Astrocyte of the cerebellum (primary cell): ENCODE measurements at regions of chr10 and their contacts with region 1.

Region 1: GRCh38 chr10:11017570-11018431 is at the start of gene CELF2:
- DNase-seq: no peak
- H3K4me3 ChIP-seq: peak within 1 kb of the TSS; percentile 49
- CTCF ChIP-seq: no peak

Region 2: GRCh38 chr10:10860455-10860976 is 157.3 kb before region 1 on chr10:
- in situ Hi-C with region 1: loop called (anchors 5 kb)
- DNase-seq: no peak
- H3K4me3 ChIP-seq: no peak overlapping the region
- CTCF ChIP-seq: no peak

Region 3: GRCh38 chr10:11255796-11256444 is 238.1 kb after region 1 on chr10:
- in situ Hi-C with region 1: no loop called
- DNase-seq: no peak
- H3K4me3 ChIP-seq: no peak overlapping the region
- CTCF ChIP-seq: no peak